ENCODE measurements at regions of chr1 and their contacts with region 1.

Region 1: GRCh38 chr1:94335950-94336349 is 82.2 kb upstream of the ABCD3 start:
- DNase-seq: peak; percentile 87
- ATAC-seq: peak; percentile 72
- H3K4me3 ChIP-seq: no peak overlapping the region
- H3K27ac ChIP-seq: peak overlapping the region; percentile 100
- H3K4me1 ChIP-seq: peaks cover 37% of the 10 kb centered on the region
- H3K27me3 ChIP-seq: no peaks in the 10 kb centered on the region
- CTCF ChIP-seq: peak; percentile 81

Region 2: GRCh38 chr1:94025383-94026340 is 310.3 kb before region 1 on chr1:
- CTCF ChIA-PET with region 1: interaction called, 19 read pairs
- POLR2A ChIA-PET with region 1: no interaction called
- in situ Hi-C with region 1: no loop called
- intact Hi-C with region 1: loop called (anchors 2 kb)
- DNase-seq: peak; percentile 54
- ATAC-seq: peak; percentile 79
- H3K4me3 ChIP-seq: peak overlapping the region; percentile 38 to 71
- H3K27ac ChIP-seq: peak overlapping the region; percentile 88
- H3K4me1 ChIP-seq: peaks cover 27% of the 10 kb centered on the region
- H3K27me3 ChIP-seq: no peaks in the 10 kb centered on the region
- CTCF ChIP-seq: peak; percentile 77

Region 3: DNA sequence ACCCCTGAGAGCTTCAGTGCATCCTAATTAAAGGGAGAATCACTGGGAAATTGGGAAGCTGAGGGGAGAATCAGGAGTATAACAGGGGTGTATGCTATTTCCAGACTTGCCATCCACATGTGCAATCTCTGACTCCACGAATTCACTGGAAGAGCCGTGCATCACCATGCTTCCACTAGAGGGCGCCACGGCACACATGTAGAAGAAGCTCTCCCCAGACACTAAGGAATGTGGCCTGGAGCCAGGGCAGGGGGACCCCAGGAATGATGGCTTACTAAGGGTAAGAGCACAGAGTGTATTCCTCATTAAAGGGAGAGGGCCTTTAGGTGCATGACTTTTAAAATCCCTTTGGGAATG is 296.5 kb before region 1 on chr1:
- CTCF ChIA-PET with region 1: interaction called, 15 read pairs
- POLR2A ChIA-PET with region 1: no interaction called
- in situ Hi-C with region 1: no loop called
- intact Hi-C with region 1: no loop called
- DNase-seq: peak; percentile 47
- ATAC-seq: peak; percentile 78
- H3K4me3 ChIP-seq: no peak overlapping the region
- H3K27ac ChIP-seq: peak overlapping the region; percentile 70
- H3K4me1 ChIP-seq: peaks cover 11% of the 10 kb centered on the region
- H3K27me3 ChIP-seq: no peaks in the 10 kb centered on the region
- CTCF ChIP-seq: peak; percentile 91

Region 4: DNA sequence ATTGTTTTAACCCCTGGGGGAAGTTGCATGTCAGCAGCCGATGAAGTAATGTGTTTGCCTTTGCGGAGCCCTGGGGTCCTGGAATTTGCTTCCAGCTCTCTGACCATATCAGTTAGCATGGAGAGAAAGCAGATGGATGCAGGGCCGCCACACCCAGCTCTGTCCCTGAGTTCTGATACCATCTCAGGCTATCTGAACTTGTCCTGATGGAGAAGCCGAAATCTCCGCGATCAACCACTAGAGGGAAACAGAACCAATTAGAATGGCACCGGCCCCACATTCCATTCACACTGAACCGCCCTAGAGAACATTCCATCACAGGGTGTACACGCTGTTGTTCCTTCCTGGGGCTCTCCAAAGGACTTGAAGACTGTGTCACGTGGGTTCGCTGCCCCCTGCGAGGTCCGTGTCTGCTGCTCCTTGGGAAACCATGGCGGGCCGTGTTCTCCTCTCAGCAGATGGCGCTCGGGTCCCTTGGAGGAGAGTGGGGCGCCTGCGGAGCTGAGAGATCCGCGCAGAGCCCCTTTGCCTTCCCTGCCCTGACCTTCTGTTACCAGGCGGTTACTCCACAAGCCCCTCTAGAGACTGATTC is 290.4 kb before region 1 on chr1:
- CTCF ChIA-PET with region 1: interaction called, 15 read pairs
- POLR2A ChIA-PET with region 1: no interaction called
- in situ Hi-C with region 1: no loop called
- intact Hi-C with region 1: no loop called
- DNase-seq: peak; percentile 75
- ATAC-seq: peak; percentile 89
- H3K4me3 ChIP-seq: no peak overlapping the region
- H3K27ac ChIP-seq: peak overlapping the region; percentile 94
- H3K4me1 ChIP-seq: peaks cover 43% of the 10 kb centered on the region
- H3K27me3 ChIP-seq: no peaks in the 10 kb centered on the region
- CTCF ChIP-seq: peak; percentile 88

Region 5: DNA sequence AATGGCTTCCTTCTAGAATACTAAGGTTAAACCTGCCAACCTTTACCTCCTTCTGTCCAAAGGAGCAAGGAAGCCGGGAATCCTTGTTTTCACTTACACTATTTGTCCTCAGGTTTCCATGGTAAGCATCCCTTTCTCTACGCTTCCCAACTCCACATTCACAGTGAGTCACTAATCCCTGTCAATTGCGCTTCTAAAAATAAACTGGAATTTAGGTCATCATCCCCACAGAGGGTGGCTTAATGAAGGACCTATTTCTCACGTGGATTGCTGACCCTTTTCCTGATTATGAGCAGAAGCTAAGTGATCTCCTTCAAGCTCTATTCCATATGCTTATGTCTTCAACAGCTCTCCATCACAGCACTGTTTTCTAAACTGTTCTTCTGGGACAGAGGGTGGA is 175.1 kb before region 1 on chr1:
- CTCF ChIA-PET with region 1: no interaction called
- POLR2A ChIA-PET with region 1: no interaction called
- in situ Hi-C with region 1: no loop called
- intact Hi-C with region 1: loop called (anchors 10 kb)
- DNase-seq: no peak
- ATAC-seq: no peak; the same call in 1 of the 2 replicates
- H3K4me3 ChIP-seq: no peak overlapping the region
- H3K27ac ChIP-seq: peak overlapping the region; percentile 58
- H3K4me1 ChIP-seq: peaks cover 3% of the 10 kb centered on the region
- H3K27me3 ChIP-seq: no peaks in the 10 kb centered on the region
- CTCF ChIP-seq: no peak

Region 6: GRCh38 chr1:94237291-94238226 is 98.4 kb before region 1 on chr1 and contains the start of gene ARHGAP29:
- CTCF ChIA-PET with region 1: interaction called, 6 read pairs
- POLR2A ChIA-PET with region 1: interaction called, 11 read pairs
- in situ Hi-C with region 1: no loop called
- intact Hi-C with region 1: no loop called
- DNase-seq: no peak
- ATAC-seq: peak; percentile 85
- H3K4me3 ChIP-seq: peak within 1 kb of the TSS; percentile 90 to 98
- H3K27ac ChIP-seq: peak within 1 kb of the TSS; percentile 99
- H3K4me1 ChIP-seq: peaks cover 36% of the 10 kb centered on the region
- H3K27me3 ChIP-seq: no peaks in the 10 kb centered on the region
- CTCF ChIP-seq: no peak
- total RNA-seq, gene ARHGAP29: 197 TPM

Region 7: DNA sequence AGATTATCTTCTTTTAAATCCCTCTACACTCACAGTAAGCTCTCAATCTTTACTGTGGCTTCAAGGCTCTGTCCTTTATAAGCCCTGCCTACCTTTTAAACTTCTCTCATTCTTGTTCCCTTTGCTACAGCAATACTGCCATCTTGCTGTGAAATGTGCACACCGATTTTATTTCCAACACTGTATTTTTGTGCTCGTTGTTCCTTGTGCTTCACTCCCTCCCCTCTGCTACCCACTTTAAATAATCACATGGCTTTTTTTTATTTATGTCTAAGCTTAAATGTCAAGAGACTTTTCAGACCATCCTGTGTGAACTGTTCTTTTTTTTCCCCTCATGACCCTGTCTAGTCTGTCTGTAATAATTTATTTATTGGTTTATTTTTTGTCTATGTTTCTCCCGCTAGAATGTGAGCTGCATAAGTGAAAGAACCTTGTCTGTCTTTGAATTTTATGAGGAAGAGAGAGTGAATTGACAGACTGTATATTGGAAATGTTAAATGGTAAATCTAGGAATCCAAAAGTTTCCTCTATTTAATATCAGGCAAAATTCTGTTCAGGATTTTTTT is 127.9 kb after region 1 on chr1:
- CTCF ChIA-PET with region 1: interaction called, 15 read pairs
- POLR2A ChIA-PET with region 1: no interaction called
- in situ Hi-C with region 1: no loop called
- intact Hi-C with region 1: no loop called
- DNase-seq: peak; percentile 15
- ATAC-seq: peak; percentile 87
- H3K4me3 ChIP-seq: no peak overlapping the region
- H3K27ac ChIP-seq: no peak overlapping the region
- H3K4me1 ChIP-seq: no peaks in the 10 kb centered on the region; the same call in 1 of the 2 replicates
- H3K27me3 ChIP-seq: no peaks in the 10 kb centered on the region
- CTCF ChIP-seq: peak; percentile 57; the same call in 1 of the 2 replicates